Psoas muscle (tissue), 8 donors: ENCODE measurements at regions of chr11 and their contacts with region 1.

Region 1: GRCh38 chr11:2092956-2093412 is 46.2 kb downstream of the IGF2 start:
- DNase-seq: peak; percentile 88 to 97
- ATAC-seq: peak; percentile 84 to 95 (median 91)
- H3K4me3 ChIP-seq: no peak overlapping the region
- H3K27ac ChIP-seq: peak overlapping the region; percentile 49
- H3K4me1 ChIP-seq: peaks cover 24% of the 10 kb centered on the region
- H3K27me3 ChIP-seq: no peaks in the 10 kb centered on the region
- CTCF ChIP-seq: no peak

Region 2: GRCh38 chr11:1832211-1832919 is 260.6 kb before region 1 on chr11:
- intact Hi-C with region 1: no loop called
- DNase-seq: peak; percentile 66 to 78
- ATAC-seq: peak; percentile 71 to 92 (median 74)
- H3K4me3 ChIP-seq: peak overlapping the region; percentile 33
- H3K27ac ChIP-seq: no peak overlapping the region
- H3K4me1 ChIP-seq: peaks cover under 1% of the 10 kb centered on the region
- H3K27me3 ChIP-seq: peaks cover 0 to 6% (median 5%) of the 10 kb centered on the region in 3 donors
- CTCF ChIP-seq: peak; percentile 99

Region 3: DNA sequence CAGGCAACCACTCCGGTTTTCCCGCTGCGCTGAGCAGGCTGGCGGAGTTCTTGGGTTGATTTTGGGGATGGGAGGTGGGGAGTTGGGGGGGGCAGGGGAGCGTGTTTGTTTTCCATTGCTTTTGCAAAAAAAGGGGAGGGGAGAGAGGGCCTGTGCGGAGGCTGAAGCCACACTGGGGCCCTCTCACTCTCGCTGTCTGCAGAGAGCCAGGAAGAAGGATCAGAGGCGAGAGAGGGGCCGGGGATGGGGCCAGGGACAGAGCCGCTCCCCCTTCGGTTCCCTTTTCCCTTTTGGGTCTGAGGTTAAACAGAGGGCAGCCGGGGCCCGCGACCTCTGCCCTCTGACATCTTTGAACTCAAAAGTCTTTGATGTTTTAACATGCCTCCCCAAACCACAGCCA is 78.0 kb before region 1 on chr11:
- intact Hi-C with region 1: no loop called
- DNase-seq: no peak
- ATAC-seq: no peak
- H3K4me3 ChIP-seq: no peak overlapping the region
- H3K27ac ChIP-seq: no peak overlapping the region
- H3K4me1 ChIP-seq: no peaks in the 10 kb centered on the region
- H3K27me3 ChIP-seq: no peaks in the 10 kb centered on the region
- CTCF ChIP-seq: no peak

Region 4: DNA sequence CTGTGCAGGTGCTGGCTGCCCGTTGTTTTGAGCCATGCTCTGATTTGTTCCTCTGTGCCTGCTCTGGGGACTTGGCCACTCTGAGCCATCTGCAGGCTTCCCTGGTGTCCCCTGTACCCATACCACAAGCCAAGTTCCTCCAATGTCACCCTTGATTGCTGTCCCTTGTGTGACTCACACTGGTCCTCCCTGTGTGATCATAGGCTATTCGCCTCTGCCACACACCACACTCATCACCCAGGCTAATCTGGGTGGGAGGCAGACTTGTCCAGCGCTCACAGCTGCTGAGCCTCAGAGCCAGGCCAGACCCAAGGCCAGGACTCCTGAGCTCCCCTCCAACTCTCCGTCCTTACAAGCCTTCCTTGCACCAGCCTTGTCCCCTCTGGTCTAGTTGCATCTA is 14.5 kb after region 1 on chr11:
- intact Hi-C with region 1: loop called in 1 of 2 experiments (anchors 2 kb)
- DNase-seq: peak in 1 of 2 donors; percentile 15
- ATAC-seq: no peak
- H3K4me3 ChIP-seq: no peak overlapping the region
- H3K27ac ChIP-seq: no peak overlapping the region
- H3K4me1 ChIP-seq: peaks cover 20% of the 10 kb centered on the region
- H3K27me3 ChIP-seq: no peaks in the 10 kb centered on the region
- CTCF ChIP-seq: no peak

Region 5: GRCh38 chr11:2211113-2211971 is 118.4 kb after region 1 on chr11:
- intact Hi-C with region 1: no loop called
- DNase-seq: peak in 1 of 2 donors; percentile 36
- ATAC-seq: no peak
- H3K4me3 ChIP-seq: no peak overlapping the region
- H3K27ac ChIP-seq: no peak overlapping the region
- H3K4me1 ChIP-seq: no peaks in the 10 kb centered on the region
- H3K27me3 ChIP-seq: peaks cover 0 to 38% (median 7%) of the 10 kb centered on the region in 3 donors
- CTCF ChIP-seq: no peak